Activated CD4-positive, alpha-beta T cell treated with anti-CD3 and anti-CD28 coated beads for 36 hours (primary cell): ENCODE measurements at regions of chr10 and their contacts with region 1.

Region 1: GRCh38 chr10:23413629-23414089 is 25.2 kb upstream of the OTUD1 start:
- DNase-seq: no peak
- ATAC-seq: no peak
- H3K4me3 Mint-ChIP-seq: no peak overlapping the region
- H3K27ac Mint-ChIP-seq: no peak overlapping the region
- H3K4me1 Mint-ChIP-seq: peaks cover 23% of the 10 kb centered on the region
- H3K27me3 Mint-ChIP-seq: peaks cover 2% of the 10 kb centered on the region

Region 2: DNA sequence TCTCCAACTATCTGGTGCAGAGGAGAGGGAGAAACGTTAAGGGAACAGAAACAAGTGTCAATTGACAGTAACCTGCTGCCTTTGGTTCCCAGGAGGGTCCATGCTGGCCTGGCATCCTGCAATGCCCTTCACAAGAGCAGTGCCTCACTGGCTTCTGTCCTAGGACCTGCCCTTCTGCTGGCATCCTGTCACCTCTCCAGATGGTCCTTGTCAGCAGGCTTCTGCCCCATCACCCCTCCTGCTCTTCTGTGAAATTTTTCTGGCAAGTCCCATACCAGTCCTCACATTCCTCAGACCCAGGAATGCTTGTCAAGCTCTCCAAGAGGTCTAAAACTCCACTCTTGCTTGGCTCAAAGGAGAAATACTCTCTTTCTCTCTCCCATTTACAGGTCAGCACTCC is 103.3 kb before region 1 on chr10:
- CTCF ChIA-PET with region 1: no interaction called
- POLR2A ChIA-PET with region 1: no interaction called
- intact Hi-C with region 1: no loop called
- DNase-seq: no peak
- ATAC-seq: no peak
- H3K4me3 Mint-ChIP-seq: no peak overlapping the region
- H3K27ac Mint-ChIP-seq: no peak overlapping the region
- H3K4me1 Mint-ChIP-seq: no peaks in the 10 kb centered on the region
- H3K27me3 Mint-ChIP-seq: peaks cover 6% of the 10 kb centered on the region

Region 3: GRCh38 chr10:23362879-23363792 is 50.5 kb before region 1 on chr10:
- CTCF ChIA-PET with region 1: no interaction called
- POLR2A ChIA-PET with region 1: no interaction called
- intact Hi-C with region 1: loop called (anchors 1 kb)
- DNase-seq: peak; percentile 67
- ATAC-seq: peak; percentile 75
- H3K4me3 Mint-ChIP-seq: peak overlapping the region; percentile 39
- H3K27ac Mint-ChIP-seq: peak overlapping the region; percentile 96
- H3K4me1 Mint-ChIP-seq: peaks cover 60% of the 10 kb centered on the region
- H3K27me3 Mint-ChIP-seq: no peaks in the 10 kb centered on the region

Region 4: DNA sequence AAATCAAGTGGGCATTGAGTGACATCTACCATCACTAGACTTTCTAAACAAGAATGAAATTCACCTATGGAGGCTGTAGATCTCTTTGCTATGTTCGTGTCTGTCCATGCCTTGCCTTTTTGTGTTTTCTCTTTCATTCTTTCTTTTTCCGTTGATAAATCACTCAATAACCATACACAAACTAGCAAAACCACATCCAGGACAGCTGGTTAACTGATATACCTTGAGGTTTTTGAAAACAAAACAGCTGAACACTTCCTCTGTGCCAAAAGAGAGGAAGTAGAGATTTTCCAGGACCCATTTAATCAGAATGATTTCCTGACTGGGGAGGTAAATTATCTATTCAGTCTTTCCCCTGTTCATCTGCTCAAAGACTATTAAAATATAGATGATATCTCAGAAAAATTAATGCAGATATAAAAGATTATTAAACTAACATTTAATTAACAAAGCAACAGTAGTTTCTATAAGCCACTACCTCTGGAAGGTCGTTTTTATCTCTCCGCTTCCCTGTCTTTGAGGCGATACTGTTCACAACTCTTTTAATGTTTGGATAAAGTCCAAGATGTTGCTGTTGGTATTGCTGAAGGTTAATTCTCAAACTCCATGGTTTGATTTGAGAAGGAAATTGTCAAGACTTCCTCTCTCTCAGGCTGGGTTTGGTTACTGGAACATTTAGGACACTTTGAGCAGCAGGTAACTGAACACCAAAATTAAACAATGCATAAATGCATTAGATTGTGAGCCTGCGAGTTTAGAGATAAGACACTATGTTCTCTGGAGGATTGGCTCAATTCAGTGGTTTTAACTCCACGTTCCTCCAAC is 44.6 kb before region 1 on chr10:
- CTCF ChIA-PET with region 1: no interaction called
- POLR2A ChIA-PET with region 1: no interaction called
- intact Hi-C with region 1: loop called in 1 of 2 experiments (anchors 1 kb)
- DNase-seq: no peak
- ATAC-seq: peak; percentile 43
- H3K4me3 Mint-ChIP-seq: peak overlapping the region; percentile 3
- H3K27ac Mint-ChIP-seq: peak overlapping the region; percentile 58
- H3K4me1 Mint-ChIP-seq: peaks cover 59% of the 10 kb centered on the region
- H3K27me3 Mint-ChIP-seq: no peaks in the 10 kb centered on the region

Region 5: GRCh38 chr10:23448802-23449570 is 35.3 kb after region 1 on chr10:
- CTCF ChIA-PET with region 1: no interaction called
- POLR2A ChIA-PET with region 1: no interaction called
- intact Hi-C with region 1: loop called in 1 of 2 experiments (anchors 2 kb)
- DNase-seq: no peak
- ATAC-seq: peak; percentile 83
- H3K4me3 Mint-ChIP-seq: no peak overlapping the region
- H3K27ac Mint-ChIP-seq: peak overlapping the region; percentile 87
- H3K4me1 Mint-ChIP-seq: peaks cover 31% of the 10 kb centered on the region
- H3K27me3 Mint-ChIP-seq: no peaks in the 10 kb centered on the region